Psoas muscle (tissue), 8 donors: ENCODE measurements at regions of chr1 and their contacts with region 1.

Region 1: DNA sequence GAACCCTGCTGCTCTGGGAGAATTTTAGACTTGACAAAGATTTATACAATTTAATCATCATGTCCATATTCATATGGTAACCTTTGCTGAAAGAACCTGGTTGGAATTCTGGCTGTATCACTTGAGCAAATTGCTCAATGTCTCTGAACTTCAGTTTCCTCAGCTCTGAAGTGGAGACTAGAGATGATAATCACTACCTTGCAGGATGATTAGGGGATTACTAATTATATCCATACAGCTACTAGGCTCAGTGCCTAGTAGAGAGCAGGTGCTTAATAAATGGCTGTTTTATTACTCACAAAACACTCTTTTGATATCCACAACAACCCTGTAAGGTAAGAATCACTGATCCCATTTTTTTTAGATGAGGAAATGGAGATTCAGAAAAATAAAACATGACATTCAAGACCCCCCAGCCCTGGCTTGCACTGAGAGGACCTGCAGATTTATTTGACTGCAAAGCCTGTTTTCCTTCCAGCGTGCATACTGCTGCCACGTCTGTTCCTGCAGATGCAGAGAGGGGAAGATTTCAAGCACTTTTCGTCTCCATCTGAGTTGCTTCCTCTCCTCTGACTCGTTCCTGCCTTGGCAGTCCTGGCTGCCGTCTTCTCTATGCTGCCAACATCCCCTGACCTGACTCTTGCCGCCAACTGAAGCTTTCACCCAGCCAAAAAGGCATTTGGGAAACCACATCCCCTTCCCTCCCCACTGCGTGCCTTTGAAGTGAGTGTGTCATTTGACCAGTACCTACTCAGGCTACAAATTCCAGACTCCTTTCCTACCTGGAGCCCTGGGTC is 203.0 kb downstream of the PLPP3 start:
- DNase-seq: peak; percentile 71 to 76
- ATAC-seq: peak; percentile 80 to 88 (median 83)
- H3K4me3 ChIP-seq: peak overlapping the region; percentile 50
- H3K27ac ChIP-seq: peak overlapping the region; percentile 86
- H3K4me1 ChIP-seq: peaks cover 49% of the 10 kb centered on the region
- H3K27me3 ChIP-seq: no peaks in the 10 kb centered on the region
- CTCF ChIP-seq: no peak

Region 2: GRCh38 chr1:56074007-56074651 is 302.3 kb before region 1 on chr1:
- intact Hi-C with region 1: loop called in 1 of 2 experiments (anchors 5 kb)
- DNase-seq: peak; percentile 63 to 65
- ATAC-seq: peak; percentile 54 to 67 (median 62)
- H3K4me3 ChIP-seq: no peak overlapping the region
- H3K27ac ChIP-seq: peak overlapping the region; percentile 83
- H3K4me1 ChIP-seq: peaks cover 26% of the 10 kb centered on the region
- H3K27me3 ChIP-seq: no peaks in the 10 kb centered on the region
- CTCF ChIP-seq: no peak

Region 3: GRCh38 chr1:56189946-56190792 is 186.2 kb before region 1 on chr1:
- intact Hi-C with region 1: loop called in 1 of 2 experiments (anchors 10 kb)
- DNase-seq: no peak
- ATAC-seq: peak; percentile 46 to 76 (median 65)
- H3K4me3 ChIP-seq: peak overlapping the region; percentile 4
- H3K27ac ChIP-seq: peak overlapping the region; percentile 15
- H3K4me1 ChIP-seq: peaks cover 9% of the 10 kb centered on the region
- H3K27me3 ChIP-seq: no peaks in the 10 kb centered on the region
- CTCF ChIP-seq: peak; percentile 46

Region 4: DNA sequence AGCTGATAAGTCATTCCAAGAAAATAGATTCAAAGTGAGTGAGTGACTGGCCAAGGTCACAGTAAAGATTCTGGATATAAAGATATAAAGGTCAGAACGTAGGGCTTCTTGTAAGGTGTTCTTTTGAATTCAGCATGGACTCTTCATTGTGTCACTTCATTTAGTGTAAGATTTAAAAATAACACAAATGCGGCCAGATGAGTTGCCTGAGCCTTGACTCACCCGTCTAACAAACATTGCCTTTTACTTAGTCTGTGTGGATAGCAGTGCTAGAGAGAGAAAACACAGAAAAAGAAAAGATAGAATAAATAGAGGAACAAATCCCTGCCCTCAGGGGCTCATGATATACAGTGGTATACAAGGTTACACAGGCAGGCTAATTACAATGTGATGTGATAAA is 20.5 kb before region 1 on chr1:
- intact Hi-C with region 1: loop called in 1 of 2 experiments (anchors 1 kb)
- DNase-seq: no peak
- ATAC-seq: peak; percentile 68 to 86 (median 78)
- H3K4me3 ChIP-seq: peak overlapping the region; percentile 16
- H3K27ac ChIP-seq: peak overlapping the region; percentile 94
- H3K4me1 ChIP-seq: peaks cover 58% of the 10 kb centered on the region
- H3K27me3 ChIP-seq: no peaks in the 10 kb centered on the region
- CTCF ChIP-seq: no peak